ENCODE measurements at regions of chr6 and their contacts with region 1.

Region 1: GRCh38 chr6:7725849-7726415 is at the start of gene BMP6:
- DNase-seq: peak; percentile 79
- ATAC-seq: peak; percentile 83
- H3K4me3 ChIP-seq: peak within 1 kb of the TSS; percentile 60
- H3K27ac ChIP-seq: no peak within 1 kb of the TSS; the same call in 1 of the 2 replicates
- H3K4me1 ChIP-seq: peaks cover 3% of the 10 kb centered on the region; the same call in 1 of the 2 replicates
- H3K27me3 ChIP-seq: peaks cover 45% of the 10 kb centered on the region
- CTCF ChIP-seq: no peak
- POLR2A ChIP-seq: no peak
- RAD21 ChIP-seq: no peak
- total RNA-seq, gene BMP6: 0.18 and 0.28 TPM in 2 replicates

Region 2: GRCh38 chr6:7446619-7447325 is 279.2 kb before region 1 on chr6:
- CTCF ChIA-PET with region 1: no interaction called
- POLR2A ChIA-PET with region 1: no interaction called
- dilution Hi-C with region 1: no loop called
- in situ Hi-C with region 1: no loop called
- intact Hi-C with region 1: no loop called
- DNase-seq: no peak
- ATAC-seq: no peak
- H3K4me3 ChIP-seq: no peak overlapping the region
- H3K27ac ChIP-seq: no peak overlapping the region
- H3K4me1 ChIP-seq: no peaks in the 10 kb centered on the region
- H3K27me3 ChIP-seq: no peaks in the 10 kb centered on the region
- CTCF ChIP-seq: no peak
- POLR2A ChIP-seq: no peak
- RAD21 ChIP-seq: no peak

Region 3: DNA sequence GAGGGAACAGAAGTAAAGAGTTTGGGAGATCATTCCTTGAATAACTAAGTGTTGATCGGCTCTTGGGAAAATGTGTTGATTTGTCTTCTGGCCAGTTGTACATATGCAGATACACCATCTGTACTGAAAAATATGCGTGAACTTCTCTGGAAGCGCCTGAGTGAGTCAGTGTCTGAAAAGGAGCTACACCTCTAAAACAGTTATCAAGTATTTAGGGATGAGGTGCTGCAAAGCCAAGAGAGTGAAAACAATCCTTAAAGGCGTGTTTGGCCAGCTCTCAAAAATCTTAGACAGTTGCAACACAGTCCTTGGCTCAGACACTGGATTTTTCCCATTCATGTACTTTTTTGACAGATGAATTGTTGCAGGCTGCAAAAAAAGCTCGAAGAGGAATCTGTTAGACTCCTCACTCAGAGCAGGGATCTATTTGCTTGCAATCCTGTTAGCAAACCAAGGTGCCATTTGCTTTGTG is 61.2 kb after region 1 on chr6:
- CTCF ChIA-PET with region 1: no interaction called
- POLR2A ChIA-PET with region 1: no interaction called
- dilution Hi-C with region 1: no loop called
- in situ Hi-C with region 1: no loop called
- intact Hi-C with region 1: loop called (anchors 2 kb)
- DNase-seq: peak; percentile 74
- ATAC-seq: peak; percentile 85
- H3K4me3 ChIP-seq: no peak overlapping the region
- H3K27ac ChIP-seq: peak overlapping the region; percentile 72; the same call in 1 of the 2 replicates
- H3K4me1 ChIP-seq: peaks cover 13% of the 10 kb centered on the region
- H3K27me3 ChIP-seq: peaks cover 6% of the 10 kb centered on the region
- CTCF ChIP-seq: no peak
- POLR2A ChIP-seq: no peak
- RAD21 ChIP-seq: no peak

Region 4: GRCh38 chr6:7899101-7899888 is 173.4 kb after region 1 on chr6:
- CTCF ChIA-PET with region 1: interaction called, 3 read pairs
- POLR2A ChIA-PET with region 1: no interaction called
- dilution Hi-C with region 1: no loop called
- in situ Hi-C with region 1: loop called (anchors 10 kb)
- intact Hi-C with region 1: loop called (anchors 5 kb)
- DNase-seq: no peak
- ATAC-seq: no peak
- H3K4me3 ChIP-seq: no peak overlapping the region
- H3K27ac ChIP-seq: no peak overlapping the region
- H3K4me1 ChIP-seq: no peaks in the 10 kb centered on the region
- H3K27me3 ChIP-seq: no peaks in the 10 kb centered on the region
- CTCF ChIP-seq: peak; percentile 10; the same call in 1 of the 2 replicates
- POLR2A ChIP-seq: no peak
- RAD21 ChIP-seq: no peak; the same call in 1 of the 2 replicates

Region 5: GRCh38 chr6:7986219-7986618 is 260.3 kb after region 1 on chr6:
- CTCF ChIA-PET with region 1: no interaction called
- POLR2A ChIA-PET with region 1: no interaction called
- dilution Hi-C with region 1: no loop called
- in situ Hi-C with region 1: loop called (anchors 5 kb)
- intact Hi-C with region 1: no loop called
- DNase-seq: no peak
- ATAC-seq: no peak
- H3K4me3 ChIP-seq: no peak overlapping the region
- H3K27ac ChIP-seq: no peak overlapping the region
- H3K4me1 ChIP-seq: no peaks in the 10 kb centered on the region
- H3K27me3 ChIP-seq: no peaks in the 10 kb centered on the region
- CTCF ChIP-seq: no peak
- POLR2A ChIP-seq: no peak
- RAD21 ChIP-seq: no peak

Region 6: DNA sequence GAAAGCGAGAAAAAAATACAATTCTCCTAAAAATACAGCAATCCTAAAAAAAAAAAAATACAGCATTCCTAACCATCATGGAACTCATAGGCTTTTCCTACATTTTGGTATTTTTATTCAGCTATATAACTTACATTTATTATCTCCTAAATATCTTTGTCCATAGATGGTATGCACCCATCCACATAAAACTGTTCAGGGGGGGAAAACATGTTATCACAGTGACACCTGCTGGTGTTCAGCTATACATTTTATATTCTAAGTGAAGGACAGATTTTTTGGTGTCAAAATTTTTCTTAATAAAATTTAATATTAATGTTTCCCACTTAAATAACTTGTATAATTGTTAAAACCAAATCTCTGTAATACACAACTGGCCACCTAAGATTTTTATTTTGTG is 280.3 kb after region 1 on chr6:
- CTCF ChIA-PET with region 1: interaction called, 5 read pairs
- POLR2A ChIA-PET with region 1: no interaction called
- dilution Hi-C with region 1: no loop called
- in situ Hi-C with region 1: loop called (anchors 5 kb)
- intact Hi-C with region 1: loop called (anchors 1 kb)
- DNase-seq: peak; percentile 51
- ATAC-seq: peak; percentile 68; the same call in 1 of the 2 replicates
- H3K4me3 ChIP-seq: no peak overlapping the region
- H3K27ac ChIP-seq: no peak overlapping the region
- H3K4me1 ChIP-seq: no peaks in the 10 kb centered on the region
- H3K27me3 ChIP-seq: no peaks in the 10 kb centered on the region
- CTCF ChIP-seq: peak; percentile 66
- POLR2A ChIP-seq: no peak
- RAD21 ChIP-seq: peak; percentile 75

Region 7: GRCh38 chr6:8063761-8064637 is 338.1 kb after region 1 on chr6 and contains the start of gene BLOC1S5:
- CTCF ChIA-PET with region 1: interaction called, 17 read pairs
- POLR2A ChIA-PET with region 1: no interaction called
- dilution Hi-C with region 1: no loop called
- in situ Hi-C with region 1: loop called (anchors 5 kb)
- intact Hi-C with region 1: loop called (anchors 1 kb)
- DNase-seq: peak; percentile 97
- ATAC-seq: peak; percentile 95
- H3K4me3 ChIP-seq: peak within 1 kb of the TSS; percentile 82
- H3K27ac ChIP-seq: peak within 1 kb of the TSS; percentile 80
- H3K4me1 ChIP-seq: no peaks in the 10 kb centered on the region
- H3K27me3 ChIP-seq: no peaks in the 10 kb centered on the region
- CTCF ChIP-seq: 0 out of 2 replicates have a peak, but pooled peaks have one; percentile 6
- POLR2A ChIP-seq: peak; percentile 75
- RAD21 ChIP-seq: peak; percentile 2; the same call in 1 of the 2 replicates
- total RNA-seq, gene BLOC1S5: 17.2 and 18.3 TPM in 2 replicates